MCF 10A (cell line): ENCODE measurements at regions of chr17 and their contacts with region 1.

Region 1: GRCh38 chr17:77287432-77288071 is 146.8 kb downstream of the SEC14L1 start:
- DNase-seq: peak; percentile 97
- H3K4me3 Mint-ChIP-seq: peak overlapping the region; percentile 75
- H3K27ac Mint-ChIP-seq: peak overlapping the region; percentile 100
- H3K4me1 Mint-ChIP-seq: peaks cover 53% of the 10 kb centered on the region
- H3K27me3 Mint-ChIP-seq: no peaks in the 10 kb centered on the region
- CTCF ChIP-seq: no peak

Region 2: DNA sequence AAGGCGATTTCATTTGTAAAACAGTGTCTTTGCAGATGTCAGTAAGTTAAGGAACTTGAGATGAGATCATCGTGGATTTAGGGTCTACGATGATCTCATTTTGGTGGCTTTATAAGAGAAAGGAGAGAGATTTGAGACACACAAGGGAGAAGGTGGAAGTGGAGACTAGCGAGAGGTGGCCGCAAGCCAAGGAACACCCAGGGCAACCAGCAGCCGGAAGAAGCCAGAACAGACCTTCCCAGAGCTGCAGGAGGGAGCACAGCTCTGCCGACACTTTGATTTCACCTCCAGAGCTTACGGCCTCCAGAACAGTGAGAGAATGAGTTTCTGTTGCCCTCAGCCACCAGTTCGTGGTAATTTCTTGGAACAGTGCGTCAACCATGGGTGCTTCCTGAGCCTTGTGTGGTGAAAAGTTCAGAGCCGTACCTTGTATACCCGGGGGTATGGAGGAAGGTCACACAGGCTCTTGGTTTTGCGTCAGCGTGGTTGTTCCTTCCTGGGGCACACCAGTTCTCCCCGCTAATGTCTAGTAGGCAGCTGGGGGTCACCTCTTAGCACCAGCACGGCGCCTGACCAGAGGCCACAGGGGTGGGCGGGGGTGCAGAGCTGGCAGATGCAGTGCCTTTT is 159.7 kb before region 1 on chr17:
- CTCF ChIA-PET with region 1: no interaction called
- POLR2A ChIA-PET with region 1: interaction called, 19 read pairs
- intact Hi-C with region 1: no loop called
- DNase-seq: peak; percentile 93
- H3K4me3 Mint-ChIP-seq: peak overlapping the region; percentile 55
- H3K27ac Mint-ChIP-seq: peak overlapping the region; percentile 46
- H3K4me1 Mint-ChIP-seq: peaks cover 40% of the 10 kb centered on the region
- H3K27me3 Mint-ChIP-seq: no peaks in the 10 kb centered on the region
- CTCF ChIP-seq: no peak

Region 3: DNA sequence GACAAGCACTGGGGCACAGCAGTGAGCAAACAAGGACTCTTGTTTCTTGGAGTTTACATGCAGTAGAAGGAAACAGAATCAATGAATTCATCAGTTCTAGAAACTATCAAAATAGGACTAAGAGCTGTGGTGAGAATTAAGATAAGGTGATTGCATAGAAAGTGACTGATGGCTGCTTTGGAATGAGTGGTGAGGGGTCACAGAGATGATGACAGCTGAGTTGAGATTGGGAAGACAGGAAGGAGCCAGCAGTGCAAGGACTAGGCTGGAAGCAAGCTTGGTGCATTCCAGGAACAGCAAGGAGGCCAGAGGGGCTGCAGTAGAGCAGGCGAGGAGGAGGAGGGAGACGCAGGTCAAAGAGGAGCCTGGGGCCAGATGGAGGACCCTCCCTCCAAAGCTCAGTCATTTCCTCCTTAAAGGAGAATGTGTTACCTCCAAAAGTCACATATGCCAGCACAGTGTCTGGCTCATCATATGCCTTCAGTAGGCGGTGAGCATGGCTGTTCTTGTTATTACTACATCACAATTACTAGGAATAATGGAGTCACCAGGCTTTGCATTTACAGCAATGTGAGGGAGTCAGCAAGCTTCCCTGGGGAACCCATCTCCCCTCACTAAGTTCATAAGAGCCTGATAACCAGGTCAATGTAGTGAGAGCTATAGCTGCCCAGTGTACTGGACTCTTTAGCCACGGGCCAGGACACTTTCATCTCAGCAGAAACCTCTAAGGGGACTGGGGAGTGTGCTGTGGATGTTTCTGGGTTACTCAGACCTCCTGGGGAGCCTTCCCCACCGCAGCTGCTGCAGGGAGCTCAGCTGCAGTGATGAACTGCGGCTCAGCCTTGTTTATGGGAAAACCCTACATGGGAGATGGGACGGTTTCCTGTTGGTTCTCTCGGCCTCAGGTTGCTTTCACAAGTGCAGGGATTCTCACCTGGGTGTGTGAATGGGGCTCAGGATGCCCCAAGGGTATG is 10.4 kb after region 1 on chr17:
- CTCF ChIA-PET with region 1: interaction called, 4 read pairs
- POLR2A ChIA-PET with region 1: interaction called, 17 read pairs
- intact Hi-C with region 1: no loop called
- DNase-seq: no peak
- H3K4me3 Mint-ChIP-seq: no peak overlapping the region
- H3K27ac Mint-ChIP-seq: no peak overlapping the region
- H3K4me1 Mint-ChIP-seq: peaks cover 27% of the 10 kb centered on the region
- H3K27me3 Mint-ChIP-seq: no peaks in the 10 kb centered on the region
- CTCF ChIP-seq: no peak

Region 4: GRCh38 chr17:77331301-77331864 is 43.8 kb after region 1 on chr17:
- CTCF ChIA-PET with region 1: interaction called, 4 read pairs
- POLR2A ChIA-PET with region 1: interaction called, 443 read pairs
- intact Hi-C with region 1: no loop called
- DNase-seq: peak; percentile 89
- H3K4me3 Mint-ChIP-seq: peak overlapping the region; percentile 48
- H3K27ac Mint-ChIP-seq: peak overlapping the region; percentile 46
- H3K4me1 Mint-ChIP-seq: peaks cover 33% of the 10 kb centered on the region
- H3K27me3 Mint-ChIP-seq: no peaks in the 10 kb centered on the region
- CTCF ChIP-seq: peak; percentile 97

Region 5: DNA sequence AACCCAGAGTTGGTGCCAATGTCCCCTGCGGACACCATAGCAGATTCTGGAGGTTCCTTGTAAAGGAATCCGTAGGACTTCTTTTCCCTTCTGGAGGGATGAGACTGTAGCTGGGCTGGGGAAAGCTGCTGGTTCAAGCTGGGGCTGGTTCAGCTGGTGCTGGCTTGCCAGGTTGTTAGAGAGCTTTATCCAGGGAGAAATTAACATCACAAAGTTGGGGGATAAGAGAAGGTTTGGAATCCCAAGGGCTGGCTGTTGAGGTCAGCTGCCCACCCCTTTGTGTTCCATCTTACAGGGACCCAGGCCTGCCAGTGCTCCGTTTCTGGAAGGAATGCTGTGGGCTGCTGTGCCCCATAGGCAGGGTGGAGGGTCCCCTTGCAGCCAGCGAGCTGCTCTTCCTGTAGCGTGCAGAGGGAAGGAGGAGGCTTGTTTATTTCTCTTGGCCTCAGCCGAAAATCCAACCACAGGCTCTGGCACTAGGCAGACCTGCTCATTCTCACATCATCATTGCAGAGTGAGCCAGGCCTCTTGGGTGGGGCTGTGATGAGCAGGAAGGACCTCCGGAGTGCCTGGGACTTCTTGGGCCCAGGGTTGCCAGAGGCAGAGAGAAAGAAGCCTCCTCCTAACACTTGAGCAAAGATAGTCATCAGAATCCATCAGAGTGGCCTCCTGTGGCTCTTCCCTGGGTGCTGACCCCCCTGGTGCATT is 104.3 kb after region 1 on chr17:
- CTCF ChIA-PET with region 1: no interaction called
- POLR2A ChIA-PET with region 1: no interaction called
- intact Hi-C with region 1: no loop called
- DNase-seq: peak; percentile 74
- H3K4me3 Mint-ChIP-seq: no peak overlapping the region
- H3K27ac Mint-ChIP-seq: peak overlapping the region; percentile 67
- H3K4me1 Mint-ChIP-seq: peaks cover 27% of the 10 kb centered on the region
- H3K27me3 Mint-ChIP-seq: no peaks in the 10 kb centered on the region
- CTCF ChIP-seq: no peak

Region 6: GRCh38 chr17:77476931-77477877 is 189.7 kb after region 1 on chr17:
- CTCF ChIA-PET with region 1: no interaction called
- POLR2A ChIA-PET with region 1: interaction called, 32 read pairs
- intact Hi-C with region 1: no loop called
- DNase-seq: peak; percentile 98
- H3K4me3 Mint-ChIP-seq: peak overlapping the region; percentile 60
- H3K27ac Mint-ChIP-seq: peak overlapping the region; percentile 81
- H3K4me1 Mint-ChIP-seq: peaks cover 54% of the 10 kb centered on the region
- H3K27me3 Mint-ChIP-seq: no peaks in the 10 kb centered on the region
- CTCF ChIP-seq: no peak